ENCODE measurements at regions of chr9 and their contacts with region 1.

Region 1: GRCh38 chr9:93207326-93207814 is 23.4 kb downstream of the WNK2 start:
- DNase-seq: peak; percentile 87
- H3K4me3 ChIP-seq: peak overlapping the region in 3 of 4 donors; percentile 8 to 15 (median 9)
- H3K27ac ChIP-seq: peak overlapping the region; percentile 77 to 86 (median 84)
- H3K4me1 ChIP-seq: peaks cover 0 to 72% (median 69%) of the 10 kb centered on the region in 4 donors
- H3K27me3 ChIP-seq: no peaks in the 10 kb centered on the region
- CTCF ChIP-seq: no peak
- EP300 ChIP-seq: peak in 1 of 4 donors; percentile 26
- POLR2A ChIP-seq: no peak

Region 2: DNA sequence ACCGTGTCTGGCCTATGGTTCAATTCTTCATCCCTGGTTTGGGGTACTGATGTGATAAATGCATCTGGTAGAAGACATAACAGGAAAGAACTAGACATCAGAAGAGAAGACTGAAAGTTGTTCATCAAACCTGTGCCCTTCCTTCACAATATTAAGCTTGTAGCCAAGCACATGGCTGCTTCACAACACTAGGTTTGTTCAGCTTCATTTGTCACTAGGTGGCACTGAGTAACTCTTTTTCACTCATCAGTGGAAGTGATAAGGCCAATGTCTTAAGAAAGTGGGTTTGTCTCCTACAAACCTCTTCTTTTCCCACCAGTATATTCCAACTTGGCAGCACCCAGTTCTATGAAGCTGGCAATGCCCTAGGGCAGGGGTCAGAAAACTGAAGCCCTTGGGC is 356.5 kb before region 1 on chr9:
- intact Hi-C with region 1: no loop called
- DNase-seq: no peak
- H3K4me3 ChIP-seq: no peak overlapping the region
- H3K27ac ChIP-seq: no peak overlapping the region
- H3K4me1 ChIP-seq: no peaks in the 10 kb centered on the region
- H3K27me3 ChIP-seq: no peaks in the 10 kb centered on the region
- CTCF ChIP-seq: no peak
- EP300 ChIP-seq: no peak
- POLR2A ChIP-seq: no peak

Region 3: GRCh38 chr9:93143830-93144530 is 63.4 kb before region 1 on chr9:
- intact Hi-C with region 1: no loop called
- DNase-seq: no peak
- H3K4me3 ChIP-seq: no peak overlapping the region
- H3K27ac ChIP-seq: peak overlapping the region; percentile 1 to 45 (median 12)
- H3K4me1 ChIP-seq: peaks cover 0 to 11% (median 5%) of the 10 kb centered on the region in 4 donors
- H3K27me3 ChIP-seq: no peaks in the 10 kb centered on the region
- CTCF ChIP-seq: no peak
- EP300 ChIP-seq: no peak
- POLR2A ChIP-seq: no peak

Region 4: GRCh38 chr9:93183609-93184431 is 23.6 kb before region 1 on chr9 and contains the start of gene WNK2:
- intact Hi-C with region 1: loop called (anchors 2 kb)
- DNase-seq: no peak
- H3K4me3 ChIP-seq: peak within 1 kb of the TSS; percentile 43 to 87 (median 60)
- H3K27ac ChIP-seq: peak within 1 kb of the TSS; percentile 81 to 89 (median 84)
- H3K4me1 ChIP-seq: peaks cover 4 to 58% (median 55%) of the 10 kb centered on the region in 4 donors
- H3K27me3 ChIP-seq: peaks cover 0 to 6% (median 0%) of the 10 kb centered on the region in 3 donors
- CTCF ChIP-seq: no peak
- EP300 ChIP-seq: no peak
- POLR2A ChIP-seq: no peak
- total RNA-seq, gene WNK2: 16.0 to 95.8 (median 29.0) TPM

Region 5: DNA sequence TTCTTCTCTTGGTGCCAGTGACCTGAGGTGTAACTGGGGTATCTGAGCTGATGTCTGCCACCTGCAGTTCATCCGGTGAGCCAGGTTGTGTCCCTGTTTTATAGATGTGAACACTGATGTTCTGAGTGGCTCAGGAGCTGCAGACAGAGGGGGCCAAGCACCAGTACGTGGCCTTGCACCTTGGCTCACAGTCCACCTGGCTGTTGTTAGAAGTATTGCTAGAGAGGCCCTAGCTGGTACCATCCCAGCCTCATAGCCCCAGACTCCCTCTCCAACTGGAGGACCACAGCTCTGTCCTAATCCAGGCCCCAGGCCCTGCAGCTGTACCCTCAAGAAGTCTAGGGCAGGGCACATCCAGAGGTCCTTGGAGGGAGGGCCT is 385.3 kb after region 1 on chr9:
- intact Hi-C with region 1: no loop called
- DNase-seq: no peak
- H3K4me3 ChIP-seq: no peak overlapping the region
- H3K27ac ChIP-seq: no peak overlapping the region
- H3K4me1 ChIP-seq: peaks cover 0 to 71% (median 49%) of the 10 kb centered on the region in 4 donors
- H3K27me3 ChIP-seq: no peaks in the 10 kb centered on the region
- CTCF ChIP-seq: no peak
- EP300 ChIP-seq: no peak
- POLR2A ChIP-seq: no peak